PC-3 (cell line): ENCODE measurements at regions of chr11 and their contacts with region 1.

Region 1: DNA sequence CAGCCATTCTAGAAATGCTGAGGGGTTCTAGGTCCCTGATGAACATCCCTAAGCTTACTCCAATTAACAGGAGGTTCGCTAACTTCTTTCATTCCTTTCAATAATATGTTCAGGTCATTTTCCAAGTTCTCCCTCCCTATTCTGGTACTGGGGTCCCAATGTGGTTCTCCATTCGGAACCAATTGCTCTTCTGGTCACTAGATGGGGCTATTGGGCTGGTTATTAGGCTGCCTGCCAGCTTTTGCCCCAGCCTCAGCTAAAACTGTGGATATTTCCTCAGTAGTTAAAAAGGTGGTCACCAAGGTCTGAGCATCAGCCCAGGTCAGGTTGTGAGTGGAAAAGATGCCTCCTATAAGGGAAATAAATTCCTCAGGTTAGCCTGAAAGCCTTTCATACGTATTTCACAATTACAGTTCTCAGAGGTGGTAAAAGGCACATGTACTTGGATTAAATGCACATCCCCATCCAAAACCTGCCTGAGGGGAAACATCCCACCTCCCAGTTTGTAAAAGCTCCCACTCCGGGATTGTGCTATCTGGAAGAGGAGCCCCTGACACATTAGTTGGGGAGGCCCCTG is 161.1 kb upstream of the CCDC179 start:
- DNase-seq: peak; percentile 56
- ATAC-seq: peak; percentile 39; the same call in 1 of the 2 replicates
- H3K4me3 ChIP-seq: no peak overlapping the region
- H3K27ac ChIP-seq: no peak overlapping the region
- H3K4me1 ChIP-seq: peaks cover 7% of the 10 kb centered on the region; the same call in 1 of the 2 replicates
- H3K27me3 ChIP-seq: no peaks in the 10 kb centered on the region
- CTCF ChIP-seq: peak; percentile 86

Region 2: GRCh38 chr11:23078289-23078971 is 57.1 kb after region 1 on chr11:
- CTCF ChIA-PET with region 1: no interaction called
- POLR2A ChIA-PET with region 1: no interaction called
- intact Hi-C with region 1: loop called (anchors 2 kb)
- DNase-seq: peak; percentile 65
- ATAC-seq: peak; percentile 93
- H3K4me3 ChIP-seq: peak overlapping the region; percentile 9; the same call in 1 of the 2 replicates
- H3K27ac ChIP-seq: peak overlapping the region; percentile 42
- H3K4me1 ChIP-seq: peaks cover 22% of the 10 kb centered on the region
- H3K27me3 ChIP-seq: no peaks in the 10 kb centered on the region
- CTCF ChIP-seq: no peak

Region 3: GRCh38 chr11:23540101-23540561 is 518.8 kb after region 1 on chr11:
- CTCF ChIA-PET with region 1: no interaction called
- POLR2A ChIA-PET with region 1: no interaction called
- intact Hi-C with region 1: loop called (anchors 1 kb)
- DNase-seq: peak; percentile 79
- ATAC-seq: peak; percentile 86
- H3K4me3 ChIP-seq: peak overlapping the region; percentile 9; the same call in 1 of the 2 replicates
- H3K27ac ChIP-seq: no peak overlapping the region
- H3K4me1 ChIP-seq: peaks cover 13% of the 10 kb centered on the region
- H3K27me3 ChIP-seq: no peaks in the 10 kb centered on the region
- CTCF ChIP-seq: peak; percentile 67

Region 4: DNA sequence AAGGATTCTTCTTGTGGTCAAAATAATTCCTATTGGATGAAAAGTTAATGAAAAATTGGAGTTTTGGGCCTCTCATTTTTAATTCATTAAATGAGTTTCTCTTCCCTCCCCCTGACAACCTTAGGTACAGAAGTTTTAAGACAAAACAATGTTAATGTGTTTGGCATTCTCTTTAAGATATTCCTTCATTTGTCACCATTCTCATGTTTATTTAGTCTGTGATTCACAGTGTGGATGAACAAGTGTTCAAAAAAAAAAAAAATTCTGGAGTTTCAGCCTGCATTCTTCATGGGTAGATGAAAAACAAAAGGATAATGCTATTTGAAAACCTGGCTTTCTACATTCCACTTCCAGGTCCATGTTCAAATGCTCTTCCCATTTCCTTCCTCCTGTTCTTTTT is 1302.8 kb after region 1 on chr11:
- CTCF ChIA-PET with region 1: no interaction called
- POLR2A ChIA-PET with region 1: no interaction called
- intact Hi-C with region 1: loop called (anchors 5 kb)
- DNase-seq: peak; percentile 40
- ATAC-seq: peak; percentile 68
- H3K4me3 ChIP-seq: no peak overlapping the region
- H3K27ac ChIP-seq: no peak overlapping the region
- H3K4me1 ChIP-seq: peaks cover 8% of the 10 kb centered on the region
- H3K27me3 ChIP-seq: no peaks in the 10 kb centered on the region
- CTCF ChIP-seq: no peak

Region 5: GRCh38 chr11:24496736-24497725 is 1475.7 kb after region 1 on chr11 and contains the start of gene LUZP2:
- CTCF ChIA-PET with region 1: no interaction called
- POLR2A ChIA-PET with region 1: no interaction called
- intact Hi-C with region 1: loop called (anchors 10 kb)
- DNase-seq: peak; percentile 50
- ATAC-seq: peak; percentile 84
- H3K4me3 ChIP-seq: peak within 1 kb of the TSS; percentile 82
- H3K27ac ChIP-seq: no peak within 1 kb of the TSS
- H3K4me1 ChIP-seq: no peaks in the 10 kb centered on the region
- H3K27me3 ChIP-seq: peaks cover 18% of the 10 kb centered on the region; the same call in 1 of the 2 replicates
- CTCF ChIP-seq: no peak
- total RNA-seq, gene LUZP2: 0.11 and 0.46 TPM in 2 replicates